Activated B cell treated with CpG ODN at 0.5 μM for 24 hours (primary cell): ENCODE measurements at regions of chr16 and their contacts with region 1.

Region 1: DNA sequence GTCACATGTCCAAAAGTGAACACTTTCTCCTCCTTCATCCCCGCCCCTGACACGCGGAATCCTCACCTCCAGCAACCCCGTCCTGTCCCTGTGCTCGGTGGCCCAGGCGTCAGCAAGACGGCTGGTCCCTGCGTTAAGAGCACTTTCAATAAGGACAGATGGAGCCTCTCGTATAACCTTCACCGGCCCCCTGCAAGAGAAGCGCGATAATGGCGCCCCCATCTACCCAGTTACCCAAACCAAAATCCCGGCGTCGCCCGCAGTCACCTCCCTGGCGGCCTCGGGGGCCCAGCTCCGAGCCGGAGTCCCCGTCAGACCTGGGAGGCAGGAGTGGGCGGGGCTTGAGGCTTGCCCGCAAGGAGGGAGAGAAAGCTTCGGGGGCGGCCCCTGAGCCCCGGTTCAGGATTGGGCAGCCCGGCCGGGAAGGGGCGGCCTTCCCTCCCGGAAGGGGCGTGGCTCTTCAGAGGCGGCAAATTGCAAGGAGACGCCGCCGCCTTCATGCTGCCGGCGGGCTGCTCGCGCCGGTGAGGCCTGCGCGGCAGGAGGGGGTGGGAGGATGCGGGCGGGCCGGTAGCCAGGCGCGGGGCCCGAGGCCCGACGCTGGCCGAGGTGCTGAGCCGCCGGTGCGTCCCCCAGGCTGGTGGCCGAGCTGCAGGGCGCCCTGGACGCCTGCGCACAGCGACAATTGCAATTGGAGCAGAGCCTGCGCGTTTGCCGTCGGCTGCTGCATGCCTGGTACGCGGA is at the start of gene TEDC2:
- DNase-seq: peak; percentile 91
- ATAC-seq: peak; percentile 100
- H3K4me3 Mint-ChIP-seq: peak within 1 kb of the TSS; percentile 86
- H3K27ac Mint-ChIP-seq: peak within 1 kb of the TSS; percentile 73
- H3K4me1 Mint-ChIP-seq: peaks cover 9% of the 10 kb centered on the region
- H3K27me3 Mint-ChIP-seq: no peaks in the 10 kb centered on the region
- CTCF ChIP-seq: no peak
- total RNA-seq, gene TEDC2: 3.4 and 4.4 TPM in 2 replicates

Region 2: DNA sequence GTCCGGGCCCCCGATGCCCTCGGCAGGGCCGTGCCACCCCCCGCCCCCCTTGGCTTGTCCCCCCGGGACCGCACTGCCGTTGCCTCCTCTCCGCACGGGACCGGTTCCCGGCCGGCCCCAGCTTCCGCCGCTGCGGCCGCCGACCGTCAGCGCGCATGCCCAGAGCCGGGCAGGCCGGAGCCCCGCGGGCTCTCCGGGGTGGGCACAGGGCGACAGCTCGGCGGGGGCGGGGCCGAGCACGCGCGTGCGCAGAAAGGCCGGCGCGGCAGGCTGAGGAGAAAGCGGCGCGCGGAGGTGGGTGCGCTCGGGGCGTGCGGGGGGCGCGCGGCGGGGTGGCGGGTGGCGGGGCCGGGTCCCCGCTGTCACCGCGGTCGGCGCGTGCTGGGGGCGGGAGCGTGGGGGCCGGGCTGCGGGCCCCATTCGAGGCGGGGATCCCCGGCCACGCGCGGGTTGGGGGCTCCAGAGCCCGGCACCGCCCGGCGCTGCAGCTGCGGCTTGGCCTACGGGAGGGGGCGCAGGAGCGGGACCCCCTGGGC is 15.1 kb after region 1 on chr16 and contains the start of gene TBC1D24:
- CTCF ChIA-PET with region 1: no interaction called
- POLR2A ChIA-PET with region 1: interaction called, 9 read pairs
- intact Hi-C with region 1: loop called (anchors 1 kb)
- DNase-seq: peak; percentile 89
- ATAC-seq: peak; percentile 79
- H3K4me3 Mint-ChIP-seq: peak within 1 kb of the TSS; percentile 83
- H3K27ac Mint-ChIP-seq: no peak within 1 kb of the TSS
- H3K4me1 Mint-ChIP-seq: peaks cover 25% of the 10 kb centered on the region
- H3K27me3 Mint-ChIP-seq: peaks cover 10% of the 10 kb centered on the region
- CTCF ChIP-seq: no peak
- total RNA-seq, gene TBC1D24: 9.1 and 12.6 TPM in 2 replicates

Region 3: GRCh38 chr16:2495041-2495440 is 35.2 kb after region 1 on chr16:
- CTCF ChIA-PET with region 1: no interaction called
- POLR2A ChIA-PET with region 1: no interaction called
- intact Hi-C with region 1: no loop called
- DNase-seq: no peak
- ATAC-seq: no peak
- H3K4me3 Mint-ChIP-seq: no peak overlapping the region
- H3K27ac Mint-ChIP-seq: no peak overlapping the region
- H3K4me1 Mint-ChIP-seq: no peaks in the 10 kb centered on the region
- H3K27me3 Mint-ChIP-seq: no peaks in the 10 kb centered on the region
- CTCF ChIP-seq: no peak

Region 4: DNA sequence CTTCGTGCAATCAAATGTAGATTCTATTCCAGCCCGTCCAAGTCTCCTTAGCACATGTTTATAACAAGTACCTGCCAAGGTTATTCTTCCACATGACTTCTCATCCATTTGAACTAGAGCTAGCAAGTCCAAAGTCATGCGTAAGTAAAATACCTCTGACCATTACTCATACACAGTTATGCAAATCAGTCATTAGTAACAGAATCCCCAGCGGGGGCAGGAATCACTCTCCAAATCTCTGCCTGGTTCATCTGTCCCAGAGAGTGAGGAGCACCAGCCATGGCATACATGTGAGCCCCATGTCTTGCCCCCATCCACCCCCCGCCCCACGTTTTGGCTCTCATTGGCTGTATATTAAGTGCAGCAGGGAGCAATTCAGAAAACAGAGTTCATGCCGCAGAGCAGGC is 1754.4 kb after region 1 on chr16:
- CTCF ChIA-PET with region 1: no interaction called
- POLR2A ChIA-PET with region 1: no interaction called
- intact Hi-C with region 1: no loop called
- DNase-seq: no peak
- ATAC-seq: no peak
- H3K4me3 Mint-ChIP-seq: no peak overlapping the region
- H3K27ac Mint-ChIP-seq: no peak overlapping the region
- H3K4me1 Mint-ChIP-seq: no peaks in the 10 kb centered on the region
- H3K27me3 Mint-ChIP-seq: peaks cover 7% of the 10 kb centered on the region
- CTCF ChIP-seq: no peak